Heart right ventricle (tissue), 16 donors: ENCODE measurements at regions of chr2 and their contacts with region 1.

Region 1: DNA sequence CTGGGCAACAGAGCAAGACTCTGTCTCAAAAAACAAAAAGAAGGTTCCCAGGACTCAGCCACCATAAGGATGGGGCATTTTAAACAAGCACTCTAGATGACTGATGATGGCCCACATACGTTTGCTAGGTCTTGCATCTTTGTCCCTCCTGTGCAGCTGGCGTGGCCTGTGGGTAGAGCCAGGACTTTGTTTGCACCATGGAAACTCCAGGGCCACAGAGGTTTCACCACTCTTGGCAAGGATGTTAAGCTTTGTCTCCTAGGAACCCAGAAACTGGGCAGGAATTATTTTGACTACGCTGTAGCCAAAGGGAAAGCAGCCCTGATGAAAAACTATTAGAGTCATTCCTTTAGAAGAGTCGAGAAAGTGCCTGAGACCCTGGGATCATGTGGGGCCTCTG is 75.3 kb upstream of the STPG4 start:
- DNase-seq: peak; percentile 61 to 63
- ATAC-seq: peak; percentile 56 to 95 (median 81)
- H3K4me3 ChIP-seq: no peak overlapping the region
- H3K27ac ChIP-seq: peak overlapping the region in 7 of 10 donors; percentile 0 to 68 (median 17)
- H3K4me1 ChIP-seq: peaks cover 8 to 34% (median 20%) of the 10 kb centered on the region in 9 donors
- H3K27me3 ChIP-seq: no peaks in the 10 kb centered on the region
- CTCF ChIP-seq: no peak

Region 2: GRCh38 chr2:47189635-47190034 is 40.8 kb before region 1 on chr2:
- intact Hi-C with region 1: loop called in 1 of 10 experiments (anchors 5 kb)
- DNase-seq: no peak
- ATAC-seq: no peak
- H3K4me3 ChIP-seq: no peak overlapping the region
- H3K27ac ChIP-seq: no peak overlapping the region
- H3K4me1 ChIP-seq: peaks cover 0 to 26% (median 17%) of the 10 kb centered on the region in 9 donors
- H3K27me3 ChIP-seq: no peaks in the 10 kb centered on the region
- CTCF ChIP-seq: no peak